Breast epithelium (tissue), 4 donors: ENCODE measurements at regions of chr3 and their contacts with region 1.

Region 1: DNA sequence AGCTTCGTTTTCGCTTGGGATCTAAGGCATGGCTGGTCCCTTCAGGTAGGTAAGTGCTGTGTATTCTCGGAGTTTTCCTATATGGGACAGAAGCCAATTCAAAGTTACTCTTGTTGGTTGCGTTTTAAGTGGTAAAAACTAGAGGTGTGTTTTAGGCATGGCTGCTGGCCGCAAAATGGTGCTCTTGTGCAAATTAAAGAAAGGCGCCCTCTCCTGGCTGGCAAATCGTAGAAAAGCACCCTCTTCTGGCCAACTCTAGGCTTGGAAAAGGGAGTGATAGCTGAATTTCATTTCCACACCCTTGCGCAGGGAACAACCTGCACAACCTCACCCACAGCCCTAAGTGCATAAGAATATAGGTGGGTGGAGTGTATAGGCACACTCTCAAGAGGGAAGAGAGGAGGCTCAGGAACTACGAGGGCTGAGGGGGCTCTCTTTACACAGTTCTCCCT is 23.5 kb downstream of the DRD3 start:
- DNase-seq: no peak
- H3K4me3 ChIP-seq: no peak overlapping the region
- H3K27ac ChIP-seq: no peak overlapping the region
- H3K4me1 ChIP-seq: no peaks in the 10 kb centered on the region
- H3K27me3 ChIP-seq: no peaks in the 10 kb centered on the region
- CTCF ChIP-seq: no peak
- POLR2A ChIP-seq: no peak

Region 2: DNA sequence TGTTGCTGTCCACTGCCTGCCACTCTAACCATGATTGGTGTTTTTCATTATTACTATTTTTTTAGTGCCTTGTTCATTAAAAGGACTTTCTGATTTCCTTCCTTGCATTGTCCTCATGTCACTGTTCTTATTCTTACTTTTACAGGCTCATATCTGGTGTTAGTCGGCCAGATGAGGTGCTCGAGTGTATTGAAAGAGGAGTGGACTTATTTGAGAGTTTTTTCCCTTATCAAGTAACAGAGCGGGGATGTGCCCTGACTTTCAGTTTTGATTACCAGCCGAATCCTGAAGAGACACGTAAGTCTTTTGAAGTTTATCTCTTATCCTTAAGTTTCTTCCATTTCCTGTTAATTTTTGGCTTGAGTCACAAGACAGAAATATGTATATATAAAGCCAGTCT is 75.6 kb before region 1 on chr3:
- intact Hi-C with region 1: loop called (anchors 2 kb)
- DNase-seq: no peak
- H3K4me3 ChIP-seq: no peak overlapping the region
- H3K27ac ChIP-seq: no peak overlapping the region
- H3K4me1 ChIP-seq: no peaks in the 10 kb centered on the region
- H3K27me3 ChIP-seq: no peaks in the 10 kb centered on the region
- CTCF ChIP-seq: no peak
- POLR2A ChIP-seq: no peak

Region 3: GRCh38 chr3:114093596-114093995 is 61.8 kb before region 1 on chr3:
- intact Hi-C with region 1: no loop called
- DNase-seq: no peak
- H3K4me3 ChIP-seq: no peak overlapping the region
- H3K27ac ChIP-seq: no peak overlapping the region
- H3K4me1 ChIP-seq: no peaks in the 10 kb centered on the region
- H3K27me3 ChIP-seq: no peaks in the 10 kb centered on the region
- CTCF ChIP-seq: no peak
- POLR2A ChIP-seq: no peak